OCI-LY7 (cell line): ENCODE measurements at regions of chr16 and their contacts with region 1.

Region 1: DNA sequence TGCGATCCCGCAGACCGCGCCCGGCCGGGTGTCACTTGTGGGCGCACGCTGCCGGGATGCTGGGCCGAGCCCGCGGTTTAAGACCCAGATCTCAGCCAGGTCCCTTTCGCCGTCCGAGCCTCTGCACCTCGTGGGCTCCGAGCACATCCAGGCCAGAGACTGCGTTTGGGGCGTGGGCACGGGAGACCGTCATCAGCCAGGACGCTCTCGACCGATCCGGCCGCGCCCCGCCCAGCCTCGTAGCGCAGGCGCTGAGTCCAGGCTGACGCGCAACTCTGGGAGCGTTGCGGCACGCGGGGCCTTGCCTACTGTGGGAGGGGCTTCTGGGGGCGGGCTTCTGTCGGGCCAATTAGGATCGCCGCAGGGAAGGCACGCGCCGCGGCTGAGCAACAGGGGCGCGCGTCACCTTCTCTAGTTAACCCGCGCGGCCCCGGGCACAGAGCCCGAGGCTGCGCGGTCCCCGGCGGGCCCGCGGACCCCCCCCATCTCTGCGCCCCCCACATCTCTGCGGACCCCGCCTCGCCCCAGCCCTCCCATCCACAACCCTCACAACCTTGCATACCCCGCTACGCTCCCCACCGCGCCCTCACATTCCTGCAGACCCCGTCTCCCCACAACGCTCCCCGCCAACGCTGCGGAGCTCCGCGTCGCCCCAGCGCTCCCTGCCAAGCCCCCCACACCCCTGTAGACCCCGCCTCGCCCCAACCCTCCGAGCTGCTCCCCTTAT is 722 bp upstream of the CEMP1 start:
- DNase-seq: peak; percentile 97
- H3K4me3 ChIP-seq: peak overlapping the region; percentile 70
- H3K27ac ChIP-seq: peak overlapping the region; percentile 69
- H3K4me1 ChIP-seq: peaks cover 18% of the 10 kb centered on the region
- CTCF ChIP-seq: no peak

Region 2: DNA sequence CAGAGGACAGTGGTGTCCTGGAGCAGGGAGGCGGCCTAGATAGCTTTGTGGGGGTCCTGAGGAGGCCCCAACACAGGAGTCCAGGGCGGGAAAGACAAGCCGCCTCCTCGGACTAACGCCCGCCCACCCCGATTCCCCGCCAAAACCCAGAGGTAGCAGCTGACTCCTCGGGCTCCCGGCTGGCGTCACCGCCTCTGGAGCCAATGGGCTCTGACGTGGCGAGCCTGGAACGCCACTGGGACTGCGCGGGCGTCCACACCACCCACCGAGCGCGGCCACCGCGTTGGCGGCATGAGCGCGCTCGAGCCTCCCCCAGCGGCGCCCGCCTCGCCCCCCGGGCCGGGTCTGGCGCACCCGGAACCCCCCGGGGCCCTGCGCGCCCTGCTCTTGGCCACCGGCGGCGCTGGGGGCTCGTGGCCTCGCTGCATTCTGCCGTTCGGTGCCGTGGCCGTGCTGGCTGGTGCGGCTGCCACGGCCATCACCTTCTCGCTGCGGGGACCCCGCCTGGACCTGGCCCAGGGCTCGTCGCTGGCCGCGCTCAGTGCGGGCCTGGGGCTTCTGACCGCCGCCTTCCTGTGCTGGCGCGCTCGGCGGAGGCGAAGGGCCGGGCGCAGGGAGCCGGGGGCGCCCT is 64.3 kb before region 1 on chr16:
- CTCF ChIA-PET with region 1: no interaction called
- POLR2A ChIA-PET with region 1: no interaction called
- intact Hi-C with region 1: loop called (anchors 2 kb)
- DNase-seq: peak; percentile 79
- H3K4me3 ChIP-seq: peak overlapping the region; percentile 64
- H3K27ac ChIP-seq: peak overlapping the region; percentile 89
- H3K4me1 ChIP-seq: peaks cover 68% of the 10 kb centered on the region
- CTCF ChIP-seq: peak; percentile 50

Region 3: GRCh38 chr16:2513405-2514322 is 18.3 kb before region 1 on chr16 and contains the start of gene ATP6V0C:
- CTCF ChIA-PET with region 1: no interaction called
- POLR2A ChIA-PET with region 1: interaction called, 4 read pairs
- intact Hi-C with region 1: loop called (anchors 2 kb)
- DNase-seq: peak; percentile 95
- H3K4me3 ChIP-seq: peak within 1 kb of the TSS; percentile 99
- H3K27ac ChIP-seq: peak within 1 kb of the TSS; percentile 80
- H3K4me1 ChIP-seq: peaks cover 47% of the 10 kb centered on the region
- CTCF ChIP-seq: no peak
- total RNA-seq, gene ATP6V0C: 15.0 and 16.4 TPM in 2 replicates

Region 4: DNA sequence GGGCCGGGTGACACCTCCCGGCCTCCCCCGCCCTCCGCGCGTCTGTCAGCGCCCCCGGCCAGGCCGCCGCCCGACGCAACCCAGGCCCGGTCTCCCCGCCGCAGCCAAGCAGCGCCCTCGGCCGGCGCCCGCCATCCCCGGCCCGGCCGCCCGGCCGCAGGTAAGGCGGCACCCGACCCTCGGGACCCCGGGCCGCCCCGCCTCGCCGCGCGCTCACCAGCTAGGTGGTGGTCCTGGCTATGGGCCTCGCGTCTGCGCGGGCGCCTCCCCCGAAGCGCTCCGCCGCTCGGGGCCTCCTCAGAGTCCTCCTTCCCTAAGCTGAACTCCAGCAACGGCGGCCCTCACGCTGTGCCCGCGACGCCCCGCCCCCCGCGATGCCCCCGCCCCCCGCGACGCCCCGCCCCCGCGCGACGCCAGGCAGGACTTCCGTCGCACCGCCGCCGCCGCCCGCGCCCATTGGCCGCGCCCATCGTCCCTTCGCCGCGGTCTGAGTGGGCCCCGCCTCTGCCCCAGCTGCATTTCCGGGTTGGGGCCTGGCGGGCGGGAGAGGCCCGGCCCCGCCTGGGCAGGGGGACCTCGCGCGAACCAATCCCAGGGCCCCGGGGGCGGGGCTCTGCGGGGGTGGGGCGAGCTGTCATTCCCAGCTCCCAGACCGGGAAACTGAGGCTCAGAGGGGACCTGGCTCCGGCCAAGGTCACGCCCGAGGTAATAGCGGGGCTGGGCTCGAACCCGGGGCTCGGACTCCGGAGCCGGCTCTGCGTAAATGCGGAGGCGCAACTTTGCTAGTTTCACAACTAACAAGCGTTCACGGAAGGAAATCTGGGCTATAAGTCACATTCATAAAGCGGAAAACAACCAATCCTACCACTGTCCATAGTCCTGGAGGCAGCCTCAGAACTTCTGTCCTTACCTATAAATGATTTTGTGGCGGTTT is 141.4 kb after region 1 on chr16:
- CTCF ChIA-PET with region 1: no interaction called
- POLR2A ChIA-PET with region 1: no interaction called
- intact Hi-C with region 1: loop called (anchors 10 kb)
- DNase-seq: peak; percentile 95
- H3K4me3 ChIP-seq: peak overlapping the region; percentile 70
- H3K27ac ChIP-seq: no peak overlapping the region
- H3K4me1 ChIP-seq: peaks cover 16% of the 10 kb centered on the region
- CTCF ChIP-seq: no peak